GM12878 (cell line): ENCODE measurements at regions of chr2 and their contacts with region 1.

Region 1: GRCh38 chr2:103161456-103162289 is 399.8 kb downstream of the TMEM182 start:
- DNase-seq: no peak
- ATAC-seq: peak; percentile 80
- H3K4me3 ChIP-seq: no peak overlapping the region
- H3K27ac ChIP-seq: no peak overlapping the region
- H3K4me1 ChIP-seq: no peaks in the 10 kb centered on the region
- H3K27me3 ChIP-seq: no peaks in the 10 kb centered on the region
- CTCF ChIP-seq: peak; percentile 69 to 81 (median 80)
- EP300 ChIP-seq: no peak
- POLR2A ChIP-seq: no peak
- RAD21 ChIP-seq: peak; percentile 80

Region 2: GRCh38 chr2:102841107-102841840 is 320.4 kb before region 1 on chr2:
- CTCF ChIA-PET with region 1: interaction called, 3 read pairs
- POLR2A ChIA-PET with region 1: no interaction called
- RAD21 ChIA-PET with region 1: no interaction called
- SMC1A ChIA-PET with region 1: interaction called, 4 read pairs
- in situ Hi-C with region 1: no loop called
- intact Hi-C with region 1: loop called (anchors 5 kb)
- DNase-seq: no peak
- ATAC-seq: peak; percentile 92
- H3K4me3 ChIP-seq: no peak overlapping the region
- H3K27ac ChIP-seq: no peak overlapping the region
- H3K4me1 ChIP-seq: no peaks in the 10 kb centered on the region
- H3K27me3 ChIP-seq: peaks cover 0 to under 1% of the 10 kb centered on the region in 2 experiments; a peak in 2 of 4 replicates
- CTCF ChIP-seq: peak; percentile 50 to 59 (median 53)
- EP300 ChIP-seq: no peak
- POLR2A ChIP-seq: no peak
- RAD21 ChIP-seq: peak; percentile 59

Region 3: GRCh38 chr2:102975996-102976975 is 185.4 kb before region 1 on chr2:
- CTCF ChIA-PET with region 1: no interaction called
- POLR2A ChIA-PET with region 1: no interaction called
- RAD21 ChIA-PET with region 1: no interaction called
- SMC1A ChIA-PET with region 1: no interaction called
- in situ Hi-C with region 1: no loop called
- intact Hi-C with region 1: loop called (anchors 5 kb)
- DNase-seq: no peak
- ATAC-seq: peak; percentile 82
- H3K4me3 ChIP-seq: no peak overlapping the region
- H3K27ac ChIP-seq: no peak overlapping the region
- H3K4me1 ChIP-seq: no peaks in the 10 kb centered on the region
- H3K27me3 ChIP-seq: no peaks in the 10 kb centered on the region; a peak in 1 of 4 replicates
- CTCF ChIP-seq: peak; percentile 50 to 61 (median 59); a peak in 5 of 6 replicates
- EP300 ChIP-seq: no peak
- POLR2A ChIP-seq: no peak
- RAD21 ChIP-seq: peak; percentile 77

Region 4: DNA sequence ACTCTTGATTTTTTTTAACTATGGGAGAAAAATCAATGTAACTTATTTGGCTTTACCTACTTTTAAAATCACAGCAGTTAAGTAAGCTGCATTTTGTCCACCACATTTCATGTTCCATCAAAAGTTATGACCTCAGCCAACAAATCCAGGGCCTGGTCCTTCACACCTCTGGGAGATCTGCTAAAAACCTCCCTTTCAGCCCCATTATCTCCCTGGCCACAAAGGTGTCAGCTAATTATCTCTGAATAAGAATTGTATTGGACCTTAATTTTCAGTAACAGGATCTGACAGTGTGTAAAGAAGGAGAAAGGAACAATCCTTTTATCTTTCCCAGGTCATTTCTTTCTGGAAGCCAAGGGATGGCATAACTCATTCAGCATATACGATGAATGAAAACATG is 40.6 kb before region 1 on chr2:
- CTCF ChIA-PET with region 1: no interaction called
- POLR2A ChIA-PET with region 1: no interaction called
- RAD21 ChIA-PET with region 1: no interaction called
- SMC1A ChIA-PET with region 1: no interaction called
- in situ Hi-C with region 1: no loop called
- intact Hi-C with region 1: no loop called
- DNase-seq: no peak
- ATAC-seq: no peak
- H3K4me3 ChIP-seq: no peak overlapping the region
- H3K27ac ChIP-seq: no peak overlapping the region
- H3K4me1 ChIP-seq: no peaks in the 10 kb centered on the region
- H3K27me3 ChIP-seq: no peaks in the 10 kb centered on the region
- CTCF ChIP-seq: no peak
- EP300 ChIP-seq: no peak
- POLR2A ChIP-seq: no peak
- RAD21 ChIP-seq: no peak

Region 5: DNA sequence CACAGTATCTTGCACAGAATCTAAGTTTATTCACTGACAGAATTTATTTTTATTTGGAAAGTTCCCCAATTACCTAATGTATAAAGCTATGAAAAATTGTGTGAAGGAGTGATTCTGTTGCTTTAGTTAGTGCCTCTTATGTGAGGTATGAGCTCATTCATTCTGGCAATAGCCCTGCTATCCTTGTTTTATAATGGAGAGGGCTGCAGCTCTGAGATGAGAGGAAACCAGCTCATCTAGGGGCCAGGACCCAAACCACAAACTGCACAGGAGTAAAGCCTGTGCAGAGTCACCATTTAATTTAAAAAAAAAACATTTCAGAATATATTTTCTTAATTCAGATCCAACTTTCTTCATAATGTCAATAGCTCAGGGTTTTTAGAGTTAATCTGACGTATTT is 16.8 kb before region 1 on chr2:
- CTCF ChIA-PET with region 1: interaction called, 14 read pairs
- POLR2A ChIA-PET with region 1: no interaction called
- RAD21 ChIA-PET with region 1: no interaction called
- SMC1A ChIA-PET with region 1: interaction called, 3 read pairs
- in situ Hi-C with region 1: no loop called
- intact Hi-C with region 1: no loop called
- DNase-seq: no peak
- ATAC-seq: no peak
- H3K4me3 ChIP-seq: no peak overlapping the region
- H3K27ac ChIP-seq: no peak overlapping the region
- H3K4me1 ChIP-seq: no peaks in the 10 kb centered on the region
- H3K27me3 ChIP-seq: no peaks in the 10 kb centered on the region; a peak in 1 of 4 replicates
- CTCF ChIP-seq: no peak
- EP300 ChIP-seq: no peak
- POLR2A ChIP-seq: no peak
- RAD21 ChIP-seq: no peak

Region 6: GRCh38 chr2:104412384-104412783 is 1250.7 kb after region 1 on chr2:
- CTCF ChIA-PET with region 1: interaction called, 5 read pairs
- POLR2A ChIA-PET with region 1: no interaction called
- RAD21 ChIA-PET with region 1: no interaction called
- SMC1A ChIA-PET with region 1: interaction called, 4 read pairs
- in situ Hi-C with region 1: loop called (anchors 25 kb)
- intact Hi-C with region 1: loop called (anchors 1 kb)
- DNase-seq: no peak
- ATAC-seq: peak; percentile 67
- H3K4me3 ChIP-seq: no peak overlapping the region
- H3K27ac ChIP-seq: no peak overlapping the region
- H3K4me1 ChIP-seq: no peaks in the 10 kb centered on the region
- H3K27me3 ChIP-seq: no peaks in the 10 kb centered on the region
- CTCF ChIP-seq: peak; percentile 47 to 65 (median 61)
- EP300 ChIP-seq: no peak
- POLR2A ChIP-seq: no peak
- RAD21 ChIP-seq: peak; percentile 48

Region 7: DNA sequence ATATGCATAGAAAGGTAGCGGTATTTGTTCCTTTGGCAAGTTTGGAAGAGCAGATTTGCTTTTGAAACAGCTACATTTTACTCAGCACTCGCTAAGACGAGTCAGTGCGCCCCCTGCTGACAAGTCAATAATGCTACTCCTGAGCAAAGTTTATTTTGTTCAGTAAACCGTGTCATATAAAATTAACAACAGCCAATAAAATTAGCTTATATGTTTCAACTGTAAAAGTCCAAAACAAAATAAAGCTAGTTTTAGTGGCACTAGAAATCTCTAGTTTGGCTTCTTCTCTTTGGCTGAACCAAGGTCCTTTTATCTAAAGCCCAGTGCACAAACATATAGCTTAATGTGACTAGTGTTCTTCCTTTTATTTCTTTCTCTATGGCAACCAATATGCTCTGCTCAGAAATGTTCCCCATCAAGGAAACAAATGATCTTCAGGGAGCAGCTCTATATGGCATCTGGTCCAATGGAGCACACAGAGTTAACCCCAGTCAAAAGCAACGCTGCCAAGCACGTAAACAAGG is 1688.0 kb after region 1 on chr2:
- CTCF ChIA-PET with region 1: interaction called, 19 read pairs
- POLR2A ChIA-PET with region 1: no interaction called
- RAD21 ChIA-PET with region 1: interaction called, 6 read pairs
- SMC1A ChIA-PET with region 1: interaction called, 14 read pairs
- in situ Hi-C with region 1: no loop called
- intact Hi-C with region 1: loop called (anchors 2 kb)
- DNase-seq: no peak
- ATAC-seq: peak; percentile 86
- H3K4me3 ChIP-seq: no peak overlapping the region
- H3K27ac ChIP-seq: no peak overlapping the region
- H3K4me1 ChIP-seq: no peaks in the 10 kb centered on the region
- H3K27me3 ChIP-seq: peaks cover 13 to 31% of the 10 kb centered on the region in 2 experiments
- CTCF ChIP-seq: peak; percentile 60 to 74 (median 72); a peak in 5 of 6 replicates
- EP300 ChIP-seq: no peak
- POLR2A ChIP-seq: no peak
- RAD21 ChIP-seq: peak; percentile 57

Region 8: DNA sequence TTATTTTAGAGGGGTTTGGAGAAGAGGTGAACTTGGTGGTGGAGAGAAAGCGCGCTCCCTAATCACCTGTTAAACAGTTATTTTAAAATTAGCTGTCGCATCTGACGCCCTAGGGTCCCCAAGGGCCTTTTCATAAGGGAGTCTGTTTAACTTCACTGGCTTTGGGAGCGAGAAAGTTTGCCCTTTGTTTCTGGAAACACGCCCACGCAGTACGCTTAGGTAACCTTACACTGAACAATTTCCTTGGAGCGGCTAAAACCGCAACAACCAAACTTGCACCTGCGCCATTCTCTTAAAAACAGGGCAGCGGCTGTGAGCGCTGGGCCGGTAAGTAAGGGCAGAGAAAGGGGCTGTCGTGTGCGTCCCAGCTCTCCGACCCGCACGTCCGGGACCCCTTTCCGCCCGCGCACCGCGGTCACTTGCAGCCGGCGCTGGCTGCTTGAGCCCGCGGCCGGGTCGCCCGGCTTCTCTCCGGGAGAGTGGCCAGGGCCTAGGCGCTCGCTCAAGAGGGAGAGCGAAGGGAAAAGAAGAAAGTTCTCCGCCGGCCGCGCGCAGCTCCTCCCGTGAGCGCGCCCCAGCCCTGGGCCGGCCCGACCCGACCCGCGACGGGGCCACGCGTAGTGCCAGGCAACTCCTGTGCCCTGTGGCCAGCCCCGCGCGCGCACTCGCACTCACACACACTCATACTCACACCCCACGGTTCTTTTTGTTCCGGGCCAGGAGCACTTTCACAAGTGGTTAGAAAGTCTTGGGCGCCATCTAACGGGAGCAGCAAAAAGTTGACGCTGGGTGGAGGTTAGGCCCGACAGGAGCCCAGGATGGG is 1711.4 kb after region 1 on chr2:
- CTCF ChIA-PET with region 1: no interaction called
- POLR2A ChIA-PET with region 1: no interaction called
- RAD21 ChIA-PET with region 1: no interaction called
- SMC1A ChIA-PET with region 1: no interaction called
- in situ Hi-C with region 1: loop called (anchors 10 kb)
- intact Hi-C with region 1: loop called (anchors 5 kb)
- DNase-seq: no peak
- ATAC-seq: peak; percentile 95
- H3K4me3 ChIP-seq: peak overlapping the region; percentile 60
- H3K27ac ChIP-seq: no peak overlapping the region
- H3K4me1 ChIP-seq: no peaks in the 10 kb centered on the region
- H3K27me3 ChIP-seq: peaks cover 13 to 28% of the 10 kb centered on the region in 2 experiments
- CTCF ChIP-seq: peak; percentile 62 to 70 (median 62)
- EP300 ChIP-seq: no peak
- POLR2A ChIP-seq: no peak
- RAD21 ChIP-seq: peak; percentile 79